H1 (cell line): ENCODE measurements at regions of chr5 and their contacts with region 1.

Region 1: DNA sequence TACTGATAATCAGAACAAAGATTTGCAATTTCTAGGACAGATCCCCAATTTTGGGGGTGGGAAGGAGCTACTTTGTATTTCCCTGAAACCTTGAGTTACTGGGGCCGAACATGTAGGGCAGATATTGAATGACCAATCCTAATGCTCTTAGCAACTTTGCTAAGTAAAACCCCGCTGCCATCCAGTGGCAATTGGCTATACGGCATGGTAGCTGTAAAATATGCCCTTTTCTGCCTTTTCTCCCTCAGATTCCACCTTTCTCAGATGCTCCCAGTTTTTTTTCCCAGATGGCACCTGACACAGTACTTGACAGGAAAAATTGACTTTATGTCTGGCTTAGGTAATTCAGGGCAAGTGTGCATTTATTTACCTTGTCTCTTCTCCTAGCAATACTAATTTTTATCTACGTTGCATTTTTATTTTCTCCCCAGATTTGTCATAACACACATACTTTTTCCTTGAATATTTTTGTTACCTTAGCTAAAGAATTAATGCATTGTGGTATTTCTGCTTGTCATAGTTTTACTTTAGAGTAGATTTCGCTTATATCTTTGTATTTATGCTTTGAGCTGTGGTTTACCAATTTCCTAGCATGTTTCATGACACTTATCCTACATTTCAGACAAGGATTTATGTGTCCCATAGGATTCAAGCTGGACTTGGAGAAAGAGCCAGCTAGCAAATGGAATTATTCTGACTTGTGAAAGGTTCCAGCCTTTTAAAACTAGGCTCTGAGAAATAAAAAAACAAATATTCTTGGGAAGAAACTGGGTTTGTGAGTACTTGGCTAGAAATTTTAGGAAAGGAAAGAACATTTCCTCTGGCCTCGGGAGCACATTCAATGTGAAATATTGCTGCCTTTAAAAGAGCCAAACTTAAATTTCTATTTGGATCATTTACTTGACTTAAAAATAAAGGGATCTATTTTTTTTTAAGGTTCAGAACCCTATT is 37.4 kb downstream of the PIK3R1 start:
- DNase-seq: peak; percentile 27 to 58
- H3K4me3 ChIP-seq: no peak overlapping the region
- H3K27ac ChIP-seq: no peak overlapping the region
- H3K4me1 ChIP-seq: peaks cover 7 to 19% (median 14%) of the 10 kb centered on the region in 4 experiments
- H3K27me3 ChIP-seq: no peaks in the 10 kb centered on the region
- CTCF ChIP-seq: peak in 2 of 3 experiments; percentile 80 to 89; a peak in 3 of 4 replicates
- EP300 ChIP-seq: no peak
- POLR2A ChIP-seq: no peak
- RAD21 ChIP-seq: peak; percentile 98

Region 2: DNA sequence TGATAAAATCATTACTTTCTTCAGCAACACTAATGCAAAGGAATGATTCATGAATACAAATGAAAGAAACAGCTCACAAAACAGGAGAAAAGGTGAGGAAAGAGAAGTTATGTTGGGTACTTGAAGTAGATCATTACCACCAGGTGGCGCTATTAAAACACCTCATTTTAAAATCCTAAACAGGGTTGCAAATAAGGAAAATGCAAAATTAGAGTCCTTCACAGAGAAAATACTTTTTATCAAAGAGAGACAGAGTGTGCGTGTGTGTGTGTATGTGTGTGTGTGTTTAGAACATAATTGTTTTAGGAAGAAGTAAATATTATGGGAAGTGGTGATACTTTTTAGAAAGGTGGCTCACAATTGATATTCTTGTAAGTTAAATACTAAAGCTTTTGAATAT is 1006.8 kb before region 1 on chr5:
- CTCF ChIA-PET with region 1: interaction called, 14 read pairs
- POLR2A ChIA-PET with region 1: interaction called, 4 read pairs
- DNase-seq: no peak
- H3K4me3 ChIP-seq: no peak overlapping the region
- H3K27ac ChIP-seq: no peak overlapping the region
- H3K4me1 ChIP-seq: peaks cover 0 to 4% (median 1%) of the 10 kb centered on the region in 4 experiments; a peak in 2 of 7 replicates
- H3K27me3 ChIP-seq: no peaks in the 10 kb centered on the region
- CTCF ChIP-seq: peak in 2 of 3 experiments; percentile 28 to 44; a peak in 2 of 4 replicates
- EP300 ChIP-seq: no peak
- POLR2A ChIP-seq: no peak
- RAD21 ChIP-seq: peak; percentile 75 to 76

Region 3: GRCh38 chr5:68229416-68229815 is 23.5 kb before region 1 on chr5:
- CTCF ChIA-PET with region 1: no interaction called
- POLR2A ChIA-PET with region 1: no interaction called
- DNase-seq: no peak
- H3K4me3 ChIP-seq: no peak overlapping the region
- H3K27ac ChIP-seq: no peak overlapping the region
- H3K4me1 ChIP-seq: 0 out of 7 replicates have a peak, but pooled peaks cover 0 to 1% (median 0%) of the 10 kb centered on the region in 4 experiments
- H3K27me3 ChIP-seq: no peaks in the 10 kb centered on the region
- CTCF ChIP-seq: no peak
- EP300 ChIP-seq: no peak
- POLR2A ChIP-seq: no peak
- RAD21 ChIP-seq: no peak

Region 4: GRCh38 chr5:68272289-68272688 is 19.3 kb after region 1 on chr5:
- CTCF ChIA-PET with region 1: interaction called, 14 read pairs
- POLR2A ChIA-PET with region 1: no interaction called
- DNase-seq: no peak
- H3K4me3 ChIP-seq: no peak overlapping the region
- H3K27ac ChIP-seq: no peak overlapping the region
- H3K4me1 ChIP-seq: peaks cover 0 to 4% (median 0%) of the 10 kb centered on the region in 4 experiments; a peak in 1 of 7 replicates
- H3K27me3 ChIP-seq: no peaks in the 10 kb centered on the region
- CTCF ChIP-seq: peak in 1 of 3 experiments; percentile 3; a peak in 1 of 4 replicates
- EP300 ChIP-seq: no peak
- POLR2A ChIP-seq: no peak
- RAD21 ChIP-seq: no peak; a peak in 1 of 4 replicates

Region 5: DNA sequence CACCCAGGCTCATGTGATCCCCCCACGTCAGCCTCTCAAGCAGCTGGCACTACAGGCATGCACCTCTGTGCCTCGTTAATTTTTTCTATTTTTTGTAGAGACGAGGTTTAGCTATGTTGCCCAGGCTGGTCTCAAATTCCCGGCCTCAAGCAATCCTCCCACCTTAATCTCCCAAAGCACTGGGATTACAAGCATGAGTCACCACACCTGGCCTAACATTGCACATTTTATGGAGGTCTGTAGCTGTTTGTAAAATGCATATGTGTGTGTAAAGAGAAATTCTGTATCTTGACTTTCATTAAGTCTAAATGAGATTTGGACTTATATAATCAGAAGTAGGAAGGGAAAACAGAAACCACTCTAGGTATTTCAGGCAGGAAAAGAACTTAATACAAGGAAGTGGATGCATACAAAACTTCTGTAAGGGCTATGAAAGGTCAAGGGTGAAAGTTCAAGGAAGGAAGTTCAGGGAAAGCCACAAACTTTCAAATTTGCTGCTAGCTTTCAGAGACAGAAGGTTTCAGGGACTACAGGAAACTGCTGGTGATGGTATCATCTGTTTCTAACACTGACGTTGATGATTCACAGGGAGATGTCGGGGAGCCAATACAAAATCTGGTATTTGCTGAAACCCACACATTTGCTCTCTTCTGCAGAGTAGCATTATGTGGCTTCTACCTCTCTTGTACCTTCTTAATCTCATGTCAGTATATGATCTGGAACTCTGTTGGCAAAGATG is 172.0 kb after region 1 on chr5:
- CTCF ChIA-PET with region 1: no interaction called
- POLR2A ChIA-PET with region 1: no interaction called
- DNase-seq: no peak
- H3K4me3 ChIP-seq: no peak overlapping the region
- H3K27ac ChIP-seq: no peak overlapping the region
- H3K4me1 ChIP-seq: peaks cover 0 to 4% (median 0%) of the 10 kb centered on the region in 4 experiments; a peak in 1 of 7 replicates
- H3K27me3 ChIP-seq: no peaks in the 10 kb centered on the region
- CTCF ChIP-seq: no peak
- EP300 ChIP-seq: no peak
- POLR2A ChIP-seq: no peak
- RAD21 ChIP-seq: no peak